Cardiac septum (tissue), 1 donor: ENCODE measurements at regions of chr16 and their contacts with region 1.

Region 1: DNA sequence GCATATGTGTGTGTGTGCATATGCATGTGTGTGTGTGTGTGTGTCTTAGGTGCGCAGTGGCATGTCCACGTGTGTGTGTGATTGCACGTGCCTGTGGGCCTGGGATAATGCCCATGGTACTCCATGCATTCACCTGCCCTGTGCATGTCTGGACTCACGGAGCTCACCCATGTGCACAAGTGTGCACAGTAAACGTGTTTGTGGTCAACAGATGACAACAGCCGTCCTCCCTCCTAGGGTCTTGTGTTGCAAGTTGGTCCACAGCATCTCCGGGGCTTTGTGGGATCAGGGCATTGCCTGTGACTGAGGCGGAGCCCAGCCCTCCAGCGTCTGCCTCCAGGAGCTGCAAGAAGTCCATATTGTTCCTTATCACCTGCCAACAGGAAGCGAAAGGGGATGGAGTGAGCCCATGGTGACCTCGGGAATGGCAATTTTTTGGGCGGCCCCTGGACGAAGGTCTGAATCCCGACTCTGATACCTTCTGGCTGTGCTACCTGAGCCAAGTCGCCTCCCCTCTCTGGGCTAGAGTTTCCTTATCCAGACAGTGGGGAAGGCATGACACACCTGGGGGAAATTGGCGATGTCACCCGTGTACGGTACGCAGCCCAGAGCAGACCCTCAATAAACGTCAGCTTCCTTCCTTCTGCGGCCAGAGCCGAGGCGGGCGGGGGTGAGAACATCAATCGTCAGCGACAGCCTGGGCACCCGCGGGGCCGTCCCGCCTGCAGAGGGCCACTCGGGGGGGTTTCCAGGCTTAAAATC is 47.6 kb downstream of the IL21R start:
- DNase-seq: no peak

Region 2: GRCh38 chr16:25838724-25839186 is 1610.9 kb before region 1 on chr16:
- intact Hi-C with region 1: loop called (anchors 10 kb)
- DNase-seq: no peak

Region 3: DNA sequence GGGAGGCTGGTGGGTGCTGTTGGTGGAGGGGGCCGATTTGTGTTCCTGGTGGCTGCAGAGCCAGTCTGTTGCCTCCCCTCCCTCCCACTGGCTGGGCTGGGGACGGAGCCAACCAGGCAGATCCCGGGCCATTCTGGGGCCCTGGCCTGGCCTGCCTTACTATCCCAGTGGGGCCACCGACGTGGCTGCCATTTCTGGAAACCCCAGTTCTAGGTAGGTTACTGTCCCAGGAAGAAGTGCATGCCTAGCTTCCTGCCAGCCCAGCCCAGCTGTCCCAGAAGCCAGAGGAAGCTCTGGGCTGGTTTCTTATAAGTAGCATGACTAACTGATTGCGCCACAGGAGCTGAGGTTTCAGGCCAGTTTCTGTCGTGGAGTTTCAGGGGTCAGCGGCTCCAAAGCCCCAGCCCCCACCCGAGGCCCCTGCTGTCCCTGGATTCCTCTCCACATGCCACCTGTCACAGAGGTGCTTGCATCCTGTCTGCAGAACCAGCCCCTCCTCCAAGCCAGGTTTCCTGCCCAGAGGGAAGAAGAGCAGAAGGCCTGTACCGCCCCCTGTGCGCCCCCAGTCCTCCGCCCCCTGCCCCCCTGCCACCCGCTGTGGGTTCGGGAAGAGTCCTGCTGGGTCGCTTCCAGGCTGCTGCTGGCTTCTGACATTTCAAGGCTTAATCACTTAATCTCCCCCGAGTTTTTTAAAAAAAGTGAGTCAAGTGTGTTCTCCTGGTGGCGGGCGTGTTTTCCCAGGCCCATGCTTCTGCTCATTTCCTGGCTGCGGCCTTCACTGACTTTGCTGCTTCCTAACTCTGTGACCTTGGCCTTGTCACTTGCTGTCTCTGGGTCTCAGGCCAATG is 122.7 kb before region 1 on chr16:
- intact Hi-C with region 1: loop called (anchors 10 kb)
- DNase-seq: peak; percentile 90

Region 4: GRCh38 chr16:27401768-27402568 is 47.6 kb before region 1 on chr16 and contains the start of gene IL21R:
- intact Hi-C with region 1: loop called (anchors 5 kb)
- DNase-seq: peak; percentile 92
- total RNA-seq, gene IL21R: 1.4 TPM

Region 5: GRCh38 chr16:27520982-27521673 is 71.5 kb after region 1 on chr16:
- intact Hi-C with region 1: no loop called
- DNase-seq: peak; percentile 89